Panc1 (cell line): ENCODE measurements at regions of chr5 and their contacts with region 1.

Region 1: GRCh38 chr5:68252673-68253623 is 37.4 kb downstream of the PIK3R1 start:
- DNase-seq: peak; percentile 35
- ATAC-seq: peak; percentile 91
- H3K4me3 ChIP-seq: no peak overlapping the region
- H3K27ac ChIP-seq: no peak overlapping the region
- H3K4me1 ChIP-seq: peaks cover 33% of the 10 kb centered on the region
- H3K27me3 ChIP-seq: no peaks in the 10 kb centered on the region
- CTCF ChIP-seq: peak; percentile 89

Region 2: DNA sequence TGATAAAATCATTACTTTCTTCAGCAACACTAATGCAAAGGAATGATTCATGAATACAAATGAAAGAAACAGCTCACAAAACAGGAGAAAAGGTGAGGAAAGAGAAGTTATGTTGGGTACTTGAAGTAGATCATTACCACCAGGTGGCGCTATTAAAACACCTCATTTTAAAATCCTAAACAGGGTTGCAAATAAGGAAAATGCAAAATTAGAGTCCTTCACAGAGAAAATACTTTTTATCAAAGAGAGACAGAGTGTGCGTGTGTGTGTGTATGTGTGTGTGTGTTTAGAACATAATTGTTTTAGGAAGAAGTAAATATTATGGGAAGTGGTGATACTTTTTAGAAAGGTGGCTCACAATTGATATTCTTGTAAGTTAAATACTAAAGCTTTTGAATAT is 1006.8 kb before region 1 on chr5:
- CTCF ChIA-PET with region 1: interaction called, 3 read pairs
- POLR2A ChIA-PET with region 1: no interaction called
- in situ Hi-C with region 1: no loop called
- intact Hi-C with region 1: loop called (anchors 2 kb)
- DNase-seq: peak; percentile 17
- ATAC-seq: peak; percentile 68; the same call in 1 of the 2 replicates
- H3K4me3 ChIP-seq: no peak overlapping the region
- H3K27ac ChIP-seq: no peak overlapping the region
- H3K4me1 ChIP-seq: no peaks in the 10 kb centered on the region
- H3K27me3 ChIP-seq: no peaks in the 10 kb centered on the region
- CTCF ChIP-seq: peak; percentile 67; the same call in 1 of the 2 replicates